GM12878 (cell line): ENCODE measurements at regions of chr9 and their contacts with region 1.

Region 1: DNA sequence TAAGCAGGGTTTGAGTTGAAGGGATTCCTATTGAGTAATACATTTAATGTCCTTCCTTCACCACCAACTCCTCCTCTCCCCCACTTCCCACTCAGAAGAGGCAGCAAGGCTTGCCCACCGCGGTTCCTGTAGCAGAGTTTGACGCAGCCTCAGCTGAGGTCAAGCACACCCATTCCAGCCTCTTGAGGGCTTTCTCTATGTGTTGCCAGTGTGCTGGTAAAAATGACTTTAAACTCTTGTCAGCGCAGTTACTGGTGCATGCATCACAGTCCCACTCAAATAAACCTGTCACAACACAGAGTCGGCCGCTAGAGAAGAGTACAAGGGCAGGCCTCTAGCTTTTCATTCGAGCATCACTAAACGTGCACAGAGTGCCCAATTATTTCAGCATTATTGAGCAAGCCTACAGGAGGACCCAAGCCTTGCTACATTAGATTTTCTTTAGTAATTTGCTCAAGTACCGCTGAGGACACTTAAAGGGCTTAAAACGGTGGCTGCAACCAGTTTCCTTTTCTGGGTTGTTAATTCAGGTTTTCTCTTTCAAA is 79.6 kb downstream of the TLE4 start:
- DNase-seq: no peak
- ATAC-seq: no peak
- H3K4me3 ChIP-seq: no peak overlapping the region
- H3K27ac ChIP-seq: no peak overlapping the region
- H3K4me1 ChIP-seq: no peaks in the 10 kb centered on the region
- H3K27me3 ChIP-seq: no peaks in the 10 kb centered on the region
- CTCF ChIP-seq: no peak
- EP300 ChIP-seq: no peak
- POLR2A ChIP-seq: no peak
- RAD21 ChIP-seq: no peak

Region 2: DNA sequence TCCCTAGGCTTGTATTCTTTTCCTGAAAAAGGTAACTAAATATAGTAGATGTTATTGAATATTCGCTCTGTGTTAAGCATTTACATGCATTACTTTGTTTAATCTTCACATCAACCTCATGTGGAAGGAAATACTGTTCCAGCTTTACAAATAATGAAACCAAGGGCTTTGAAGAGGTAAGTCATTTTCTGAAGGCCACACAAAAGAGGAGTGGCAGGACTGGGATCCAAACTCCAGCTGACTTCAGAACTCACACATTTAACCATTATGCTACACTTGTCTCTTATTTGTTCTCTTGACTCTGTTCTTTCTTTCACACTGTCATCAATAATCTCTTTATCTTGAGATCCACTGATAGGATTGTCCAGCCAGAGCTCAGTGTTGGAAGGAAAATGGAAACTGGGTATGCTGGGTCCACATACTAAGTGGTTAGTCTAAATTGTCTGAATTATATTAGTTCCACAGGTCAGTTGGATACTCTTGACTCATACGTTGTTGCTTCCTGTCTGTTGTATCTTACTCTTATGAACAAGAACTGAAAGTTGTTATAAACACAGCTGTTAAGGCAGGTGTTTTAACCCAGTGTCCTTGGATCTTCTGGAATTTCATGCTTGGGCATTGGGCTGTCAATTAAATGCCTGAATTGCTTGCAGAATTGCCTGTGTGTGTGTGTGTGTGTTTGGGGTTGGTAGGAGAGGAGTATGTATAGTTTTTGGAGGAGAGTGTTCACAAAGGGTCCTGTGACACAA is 14.0 kb before region 1 on chr9:
- CTCF ChIA-PET with region 1: interaction called, 11 read pairs
- POLR2A ChIA-PET with region 1: interaction called, 3 read pairs
- RAD21 ChIA-PET with region 1: no interaction called
- SMC1A ChIA-PET with region 1: interaction called, 12 read pairs
- in situ Hi-C with region 1: no loop called
- intact Hi-C with region 1: no loop called
- DNase-seq: no peak
- ATAC-seq: peak; percentile 60
- H3K4me3 ChIP-seq: no peak overlapping the region
- H3K27ac ChIP-seq: no peak overlapping the region
- H3K4me1 ChIP-seq: no peaks in the 10 kb centered on the region
- H3K27me3 ChIP-seq: no peaks in the 10 kb centered on the region
- CTCF ChIP-seq: no peak
- EP300 ChIP-seq: no peak
- POLR2A ChIP-seq: no peak
- RAD21 ChIP-seq: no peak